GM10248 (cell line): ENCODE measurements at regions of chr16 and their contacts with region 1.

Region 1: GRCh38 chr16:57648590-57649442 is 19.3 kb upstream of the ADGRG3 start:
- DNase-seq: peak; percentile 92
- CTCF ChIP-seq: peak; percentile 100

Region 2: DNA sequence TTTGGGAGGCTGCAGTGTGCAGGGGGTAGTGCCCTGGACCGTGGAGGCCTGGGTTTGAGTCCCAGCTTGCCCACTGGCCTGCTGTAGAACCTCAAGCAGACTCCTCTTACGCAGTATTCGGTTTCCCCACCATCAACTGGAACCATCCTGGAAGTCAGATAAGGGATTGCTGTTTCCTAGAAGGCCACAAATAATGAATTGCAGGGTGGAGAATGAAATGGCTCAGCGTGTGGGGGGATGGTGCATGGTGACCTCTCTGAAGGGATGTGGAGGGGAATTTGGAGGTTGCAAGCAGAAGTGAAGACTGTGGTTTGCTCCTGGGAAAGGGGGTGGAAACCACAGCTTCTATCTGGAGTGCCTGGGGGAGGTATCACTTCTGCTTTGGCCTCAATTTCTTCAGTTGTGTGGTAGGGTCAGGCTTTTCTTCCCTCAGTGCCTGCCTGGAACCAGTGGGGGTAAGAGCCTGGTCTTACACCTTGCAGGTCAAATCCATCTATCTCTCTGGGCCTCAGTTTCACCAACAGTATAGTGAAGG is 104.6 kb before region 1 on chr16:
- CTCF ChIA-PET with region 1: interaction called, 16 read pairs
- POLR2A ChIA-PET with region 1: no interaction called
- DNase-seq: peak; percentile 72
- CTCF ChIP-seq: no peak

Region 3: DNA sequence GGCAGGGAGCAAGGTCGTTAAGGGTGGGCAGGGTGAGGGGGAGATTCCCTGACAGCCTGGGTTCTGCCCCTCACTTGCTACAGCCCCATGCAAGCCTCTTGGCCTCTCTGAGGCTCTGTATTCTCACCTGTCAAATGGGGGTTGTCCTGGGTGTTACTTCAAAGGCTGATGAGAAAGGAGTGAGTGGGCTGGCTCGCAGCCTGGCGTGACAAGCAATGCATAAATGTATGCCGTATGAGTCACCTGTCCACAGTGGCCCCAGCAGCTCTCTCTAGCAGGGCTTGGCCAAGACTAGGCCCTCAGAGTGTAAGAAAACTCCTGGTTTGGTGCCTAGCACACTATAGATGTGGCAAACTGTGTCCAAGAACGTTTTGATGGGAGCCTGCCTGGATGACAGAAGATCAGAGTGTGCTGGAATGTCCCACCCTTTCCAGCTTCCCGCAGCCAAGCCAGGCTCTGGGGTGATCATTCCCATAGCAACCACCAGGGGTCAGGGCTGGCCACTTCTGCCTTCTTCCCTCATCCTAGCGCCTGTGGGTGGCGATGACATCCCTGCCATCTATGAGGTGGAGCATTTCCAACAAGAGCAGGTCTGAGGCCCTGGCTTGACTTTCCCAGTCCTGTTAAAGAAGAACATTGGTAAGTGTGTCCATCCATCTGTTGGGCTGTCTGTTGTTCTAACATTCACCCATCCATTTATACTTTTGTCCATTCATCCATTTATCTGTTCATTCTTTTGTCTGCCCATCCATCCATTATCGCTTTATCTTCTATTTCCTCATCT is 57.5 kb before region 1 on chr16:
- CTCF ChIA-PET with region 1: interaction called, 219 read pairs
- POLR2A ChIA-PET with region 1: no interaction called
- DNase-seq: peak; percentile 79
- CTCF ChIP-seq: peak; percentile 84

Region 4: GRCh38 chr16:57609541-57610401 is 39.0 kb before region 1 on chr16:
- CTCF ChIA-PET with region 1: interaction called, 72 read pairs
- POLR2A ChIA-PET with region 1: no interaction called
- DNase-seq: peak; percentile 85
- CTCF ChIP-seq: peak; percentile 47

Region 5: DNA sequence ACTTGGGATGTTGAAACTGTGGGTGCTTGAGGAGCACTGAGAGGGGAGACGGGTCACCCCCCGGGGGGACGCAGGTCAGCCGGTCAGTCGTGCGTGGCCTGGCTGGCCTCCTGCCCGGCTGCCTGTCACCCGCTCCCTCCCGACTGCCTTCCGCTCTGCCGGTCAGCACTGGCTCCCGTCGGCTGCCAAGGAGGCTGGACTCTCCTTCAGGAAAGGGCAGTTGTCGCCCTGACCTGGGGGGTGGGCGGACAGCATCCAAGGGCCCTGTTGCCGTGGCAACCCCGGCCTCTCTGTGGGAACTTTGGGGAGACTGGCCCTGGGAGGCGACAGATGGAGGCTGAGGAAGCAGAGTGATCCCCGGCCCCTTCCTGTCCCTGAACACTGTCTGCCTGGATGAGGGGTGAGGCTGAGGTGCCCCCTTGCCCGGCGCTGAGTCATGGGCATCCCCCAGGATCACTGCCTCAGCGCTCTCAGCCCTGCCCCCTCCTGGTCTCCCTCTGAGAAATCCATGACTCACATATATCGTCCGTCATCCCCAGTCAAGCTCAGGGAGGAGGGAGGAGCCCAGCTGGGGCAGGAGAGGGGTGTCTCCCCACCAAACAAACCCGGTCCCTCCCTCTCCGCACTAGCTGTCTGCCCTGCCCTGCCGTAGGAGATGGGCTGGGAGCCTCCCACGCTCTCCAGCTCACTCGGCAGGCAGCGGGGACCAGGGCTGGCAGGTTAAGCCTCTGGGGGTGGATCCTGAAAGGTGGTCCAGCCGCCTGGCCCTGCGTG is 20.6 kb before region 1 on chr16 and contains the start of gene ADGRG1:
- CTCF ChIA-PET with region 1: interaction called, 117 read pairs
- POLR2A ChIA-PET with region 1: no interaction called
- DNase-seq: peak; percentile 47
- CTCF ChIP-seq: no peak

Region 6: GRCh38 chr16:57846078-57846697 is 197.4 kb after region 1 on chr16:
- CTCF ChIA-PET with region 1: no interaction called
- POLR2A ChIA-PET with region 1: no interaction called
- DNase-seq: no peak
- CTCF ChIP-seq: no peak

Region 7: DNA sequence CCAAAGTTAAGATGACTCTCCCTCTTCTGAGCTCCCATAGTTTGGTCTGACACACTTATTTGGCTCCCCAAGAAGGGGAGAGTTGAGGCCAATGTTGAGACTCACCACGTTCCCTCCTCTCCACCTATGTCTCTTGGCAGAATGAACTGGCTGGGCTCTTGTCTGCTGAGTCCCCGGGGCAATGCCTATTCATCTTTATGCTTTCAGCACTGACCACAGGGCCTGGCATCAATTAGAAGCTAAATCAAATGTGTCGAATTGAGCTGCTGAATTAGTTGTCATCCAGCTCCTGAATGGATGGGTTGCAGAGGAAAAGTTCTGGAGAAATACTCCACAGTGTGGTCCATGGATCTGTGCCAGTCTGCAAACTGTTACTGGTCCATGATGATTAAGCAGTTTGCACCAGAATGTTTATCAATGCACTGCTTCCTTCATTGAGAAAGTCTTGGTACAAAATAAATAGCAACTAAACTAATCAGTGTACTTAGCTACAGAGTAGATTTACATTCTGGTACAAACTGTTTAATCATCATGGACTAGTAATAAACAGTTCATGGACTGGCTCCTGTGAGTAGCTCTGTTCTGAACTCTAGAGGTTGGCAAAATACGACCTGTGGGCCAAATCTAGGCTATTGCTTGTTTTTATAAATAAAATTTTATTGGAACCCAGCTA is 317.5 kb after region 1 on chr16:
- CTCF ChIA-PET with region 1: no interaction called
- POLR2A ChIA-PET with region 1: no interaction called
- DNase-seq: no peak
- CTCF ChIP-seq: no peak

Region 8: GRCh38 chr16:59030923-59031485 is 1382.2 kb after region 1 on chr16:
- CTCF ChIA-PET with region 1: no interaction called
- POLR2A ChIA-PET with region 1: no interaction called
- DNase-seq: no peak
- CTCF ChIP-seq: no peak